ENCODE measurements at regions of chr2 and their contacts with region 1.

Region 1: DNA sequence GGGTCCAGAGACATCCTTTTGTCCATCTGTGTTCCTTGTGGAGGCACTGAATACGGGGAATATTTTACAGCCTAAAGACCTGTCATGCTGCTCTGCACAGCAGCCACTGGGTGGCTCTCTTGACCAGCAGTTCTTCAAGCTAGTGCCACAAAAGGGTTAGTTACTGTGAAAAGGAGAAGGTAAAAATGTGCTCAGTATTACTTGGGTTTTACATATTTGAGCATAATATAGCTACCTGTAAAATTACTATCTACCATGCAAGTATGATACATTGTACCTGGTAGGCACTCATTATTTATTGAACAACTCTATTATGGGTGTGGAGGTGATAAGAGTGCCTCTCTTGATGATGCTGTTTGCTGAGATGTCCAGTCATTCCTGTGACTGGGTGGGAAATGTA is 23.6 kb downstream of the FZD5 start:
- DNase-seq: peak; percentile 65
- CTCF ChIP-seq: peak; percentile 92

Region 2: GRCh38 chr2:207655000-207655399 is 91.1 kb before region 1 on chr2:
- in situ Hi-C with region 1: no loop called
- DNase-seq: no peak
- CTCF ChIP-seq: no peak

Region 3: GRCh38 chr2:207883002-207883780 is 137.1 kb after region 1 on chr2:
- in situ Hi-C with region 1: no loop called
- DNase-seq: peak; percentile 32
- CTCF ChIP-seq: no peak

Region 4: DNA sequence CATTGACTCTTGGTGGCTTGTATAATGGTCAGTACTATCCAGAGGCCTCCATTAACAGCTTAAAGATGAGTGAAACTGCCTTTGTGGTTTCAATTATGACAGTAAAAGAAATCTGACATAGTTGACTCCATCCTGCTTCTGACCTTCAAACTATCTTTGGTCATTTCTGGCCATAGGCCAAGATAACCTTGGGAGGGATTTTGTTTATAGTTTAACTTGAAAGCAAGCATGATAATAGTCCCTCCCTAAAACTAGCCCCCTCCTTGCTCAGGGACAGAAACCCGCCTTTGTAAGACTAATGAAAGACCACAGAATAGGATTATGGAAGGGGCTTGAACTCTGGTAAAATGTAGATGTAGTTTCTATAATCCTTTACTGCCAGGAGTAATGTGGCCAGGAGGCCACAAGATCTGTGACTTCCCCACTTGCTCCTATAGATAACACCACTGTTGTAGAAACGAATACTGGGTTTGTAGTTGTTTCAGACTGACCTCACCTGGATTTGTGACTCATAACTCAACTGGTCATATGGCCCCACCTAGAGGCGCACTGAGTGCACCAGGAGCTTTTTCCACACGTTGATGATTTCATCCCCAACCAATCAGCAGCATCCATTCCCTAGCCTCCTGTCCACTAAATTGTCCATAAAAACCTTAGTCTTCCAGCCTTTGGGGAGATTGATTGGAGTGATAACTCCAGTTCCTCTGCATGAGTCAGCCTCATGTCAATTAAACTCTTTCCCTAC is 287.8 kb after region 1 on chr2:
- in situ Hi-C with region 1: loop called (anchors 10 kb)
- DNase-seq: peak; percentile 58
- CTCF ChIP-seq: peak; percentile 73

Region 5: DNA sequence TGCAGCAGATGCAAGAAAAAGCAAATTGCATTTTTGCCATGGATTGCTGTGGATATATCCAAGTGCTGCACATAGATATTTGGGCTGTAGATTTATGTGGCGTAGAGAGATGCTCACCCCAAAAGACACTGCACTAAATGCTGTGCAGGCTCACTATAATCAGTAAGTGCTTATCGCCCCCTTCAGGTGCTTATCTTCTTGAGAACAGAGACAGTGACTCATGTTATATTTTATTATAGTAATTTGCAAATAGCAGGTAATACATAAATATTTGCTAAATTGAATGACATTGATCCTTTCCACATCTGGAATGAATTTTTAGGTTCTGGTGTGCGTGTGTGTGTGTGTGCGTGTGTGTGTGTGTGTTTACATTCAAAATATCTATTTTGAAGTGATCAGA is 316.0 kb after region 1 on chr2:
- in situ Hi-C with region 1: loop called (anchors 10 kb)
- DNase-seq: no peak
- CTCF ChIP-seq: peak; percentile 40

Measured in GM13977 (cell line).